CD14-positive monocyte (primary cell): ENCODE measurements at regions of chr6 and their contacts with region 1.

Region 1: DNA sequence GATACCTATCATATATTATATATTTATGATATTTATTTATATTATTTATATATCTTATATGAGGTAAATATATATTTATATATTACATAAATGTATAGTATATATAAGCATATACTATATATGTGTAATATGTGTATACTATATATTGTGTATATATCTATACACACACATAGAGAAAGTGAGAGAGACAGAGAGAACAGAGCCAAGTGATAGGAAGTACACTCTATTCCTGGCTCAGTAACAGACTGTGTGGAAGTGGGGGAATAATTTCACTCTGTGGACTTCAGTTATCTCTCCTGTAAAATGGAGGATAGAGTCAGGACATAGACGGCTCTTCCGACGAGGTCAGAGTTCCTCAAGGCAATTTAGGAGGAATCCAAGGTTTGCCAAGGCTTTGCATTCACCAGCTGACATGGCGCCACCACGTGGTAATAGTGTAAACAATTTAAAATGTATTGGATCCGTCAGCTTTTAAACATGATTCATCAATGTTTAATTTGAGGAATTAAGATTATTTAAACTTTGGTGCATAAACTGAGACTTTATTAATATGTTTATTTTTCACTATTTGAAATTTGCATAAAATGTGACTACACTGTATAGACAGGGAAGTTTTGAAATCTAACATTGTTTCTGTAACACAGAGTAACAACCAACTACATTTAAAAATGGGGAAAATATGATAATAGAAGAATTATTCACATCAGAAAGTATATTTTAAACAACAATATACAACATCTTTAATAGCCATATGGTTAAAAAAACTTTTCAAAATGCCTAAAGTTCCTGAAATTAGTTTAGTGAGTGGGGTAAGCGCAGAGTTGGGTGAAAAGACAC is 75.4 kb upstream of the TMEM244 start:
- DNase-seq: peak; percentile 53 to 67 (median 67)
- H3K4me3 ChIP-seq: peak overlapping the region in 1 of 3 experiments; percentile 34
- H3K4me3 Mint-ChIP-seq: peak overlapping the region in 1 of 2 donors; percentile 69
- H3K27ac ChIP-seq: no peak overlapping the region
- H3K27ac Mint-ChIP-seq: peak overlapping the region in 2 of 7 donors; percentile 37 to 49
- H3K4me1 ChIP-seq: peaks cover 0 to 3% of the 10 kb centered on the region in 2 donors
- H3K4me1 Mint-ChIP-seq: peaks cover 2% of the 10 kb centered on the region
- H3K27me3 ChIP-seq: no peaks in the 10 kb centered on the region
- H3K27me3 Mint-ChIP-seq: peaks cover under 1 to 8% (median 7%) of the 10 kb centered on the region in 3 donors
- CTCF ChIP-seq: peak; percentile 73

Region 2: DNA sequence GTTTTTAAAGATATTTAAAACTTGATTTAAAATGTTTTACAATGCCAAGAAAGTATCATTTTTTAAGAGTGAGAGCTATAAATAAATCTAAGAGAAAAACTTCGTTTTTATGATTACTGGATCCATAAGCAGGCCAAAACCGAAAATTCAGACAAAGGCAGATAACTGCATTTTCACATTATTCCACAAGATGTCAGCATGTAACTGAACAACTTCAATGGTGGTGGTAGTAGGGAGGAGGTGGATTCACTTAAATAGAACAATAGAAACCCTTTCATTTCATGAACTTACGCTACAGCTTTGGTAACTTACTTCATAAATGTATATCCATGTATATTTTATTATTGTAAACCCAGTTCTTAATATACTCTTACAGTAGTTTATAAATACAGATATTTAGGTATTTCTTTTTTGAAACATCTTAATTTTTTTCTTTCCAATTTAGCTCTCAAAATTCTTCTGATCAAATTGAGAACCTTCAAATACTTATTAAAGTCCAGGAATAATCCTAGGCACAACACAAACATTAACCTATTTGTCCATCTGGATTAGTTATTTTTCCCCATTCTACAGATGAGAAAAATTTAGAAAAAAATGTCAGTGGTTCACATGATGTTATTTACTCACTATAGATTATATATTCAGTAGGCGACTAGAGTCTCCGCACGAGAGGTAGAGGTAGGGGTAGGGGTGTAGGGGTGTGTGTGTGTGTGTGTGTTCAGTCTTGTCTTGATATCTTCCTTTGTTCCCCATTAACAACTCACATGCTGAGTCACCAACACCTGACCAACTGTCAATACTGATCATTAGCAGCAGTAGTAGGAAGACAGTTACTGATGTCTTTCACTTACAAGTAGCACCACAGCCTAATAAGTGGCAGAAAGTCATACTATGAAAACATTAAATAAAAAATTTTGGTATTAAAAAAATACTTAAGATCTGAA is 338.0 kb before region 1 on chr6:
- intact Hi-C with region 1: loop called in 1 of 2 experiments (anchors 10 kb)
- DNase-seq: peak; percentile 48 to 71 (median 60)
- H3K4me3 ChIP-seq: no peak overlapping the region
- H3K4me3 Mint-ChIP-seq: no peak overlapping the region
- H3K27ac ChIP-seq: no peak overlapping the region
- H3K27ac Mint-ChIP-seq: no peak overlapping the region
- H3K4me1 ChIP-seq: no peaks in the 10 kb centered on the region
- H3K4me1 Mint-ChIP-seq: no peaks in the 10 kb centered on the region
- H3K27me3 ChIP-seq: no peaks in the 10 kb centered on the region
- H3K27me3 Mint-ChIP-seq: peaks cover 0 to 2% (median 0%) of the 10 kb centered on the region in 3 donors
- CTCF ChIP-seq: peak; percentile 80

Region 3: DNA sequence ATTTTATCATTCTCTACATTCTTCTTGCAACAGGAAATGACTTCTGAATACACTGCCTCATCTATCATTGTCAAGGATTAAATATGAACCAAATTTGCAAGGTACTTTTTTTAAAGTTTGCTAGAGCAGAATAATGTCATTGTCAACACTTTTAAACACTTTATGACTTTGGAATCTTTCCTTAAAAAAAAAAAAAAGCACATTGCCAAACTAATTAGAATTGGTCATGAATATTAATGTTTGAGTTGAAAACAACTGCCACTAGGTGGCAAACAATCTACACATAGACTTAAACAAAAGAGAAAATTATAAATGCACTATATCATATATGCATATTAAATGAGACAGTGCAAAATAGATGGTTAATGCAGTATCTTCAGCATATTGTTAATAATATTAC is 42.9 kb before region 1 on chr6:
- intact Hi-C with region 1: loop called in 1 of 2 experiments (anchors 5 kb)
- DNase-seq: peak in 2 of 3 donors; percentile 30 to 46
- H3K4me3 ChIP-seq: no peak overlapping the region
- H3K4me3 Mint-ChIP-seq: no peak overlapping the region
- H3K27ac ChIP-seq: no peak overlapping the region
- H3K27ac Mint-ChIP-seq: no peak overlapping the region
- H3K4me1 ChIP-seq: peaks cover 28 to 41% of the 10 kb centered on the region in 2 donors
- H3K4me1 Mint-ChIP-seq: peaks cover 28% of the 10 kb centered on the region
- H3K27me3 ChIP-seq: no peaks in the 10 kb centered on the region
- H3K27me3 Mint-ChIP-seq: peaks cover 0 to 2% (median 0%) of the 10 kb centered on the region in 3 donors
- CTCF ChIP-seq: peak; percentile 75

Region 4: DNA sequence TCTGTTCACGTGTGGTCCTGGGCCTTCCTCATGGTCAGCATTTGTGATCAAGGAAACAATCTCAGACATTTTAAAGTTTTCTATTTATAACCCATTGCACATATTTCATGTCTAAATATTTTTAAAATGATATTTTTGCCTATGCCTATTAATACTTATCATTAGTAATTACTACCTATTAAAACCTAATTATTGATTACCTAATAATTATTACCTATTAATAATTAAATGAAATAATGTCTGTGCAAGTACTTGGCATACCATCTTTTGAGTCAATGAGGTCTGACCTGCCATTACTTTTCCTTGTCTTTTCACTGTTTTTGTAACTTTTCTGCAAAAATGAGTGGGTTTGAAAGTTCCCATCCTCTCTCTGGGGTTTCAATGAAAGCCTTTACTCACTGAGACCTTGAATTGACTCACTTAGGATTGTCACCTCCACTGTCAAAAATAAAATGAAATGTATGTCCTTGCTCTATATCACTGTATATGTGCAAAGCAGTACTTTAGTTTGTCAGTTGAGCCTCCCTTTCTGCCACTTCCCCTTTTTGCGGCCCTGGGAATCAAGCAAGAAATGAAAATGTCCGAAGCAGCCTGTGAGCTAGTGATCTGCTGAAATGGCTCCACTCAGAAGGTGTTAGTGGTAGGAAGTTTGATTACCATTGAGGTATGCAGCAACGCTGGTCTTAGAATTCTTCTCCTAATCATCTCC is 169.6 kb after region 1 on chr6:
- intact Hi-C with region 1: no loop called
- DNase-seq: peak; percentile 1 to 7 (median 2)
- H3K4me3 ChIP-seq: no peak overlapping the region
- H3K4me3 Mint-ChIP-seq: no peak overlapping the region
- H3K27ac ChIP-seq: no peak overlapping the region
- H3K27ac Mint-ChIP-seq: peak overlapping the region in 2 of 7 donors; percentile 19 to 55
- H3K4me1 ChIP-seq: no peaks in the 10 kb centered on the region
- H3K4me1 Mint-ChIP-seq: peaks cover 5% of the 10 kb centered on the region
- H3K27me3 ChIP-seq: no peaks in the 10 kb centered on the region
- H3K27me3 Mint-ChIP-seq: no peaks in the 10 kb centered on the region
- CTCF ChIP-seq: no peak